ENCODE measurements at regions of chr4 and their contacts with region 1.

Region 1: GRCh38 chr4:41281038-41281634 is 24.4 kb downstream of the UCHL1 start:
- H3K4me3 Mint-ChIP-seq: no peak overlapping the region
- H3K27ac Mint-ChIP-seq: no peak overlapping the region
- H3K4me1 Mint-ChIP-seq: no peaks in the 10 kb centered on the region
- H3K27me3 Mint-ChIP-seq: peaks cover 6% of the 10 kb centered on the region

Region 2: GRCh38 chr4:40763228-40763716 is 517.9 kb before region 1 on chr4:
- intact Hi-C with region 1: no loop called
- H3K4me3 Mint-ChIP-seq: no peak overlapping the region
- H3K27ac Mint-ChIP-seq: no peak overlapping the region
- H3K4me1 Mint-ChIP-seq: peaks cover 9% of the 10 kb centered on the region
- H3K27me3 Mint-ChIP-seq: no peaks in the 10 kb centered on the region

Region 3: DNA sequence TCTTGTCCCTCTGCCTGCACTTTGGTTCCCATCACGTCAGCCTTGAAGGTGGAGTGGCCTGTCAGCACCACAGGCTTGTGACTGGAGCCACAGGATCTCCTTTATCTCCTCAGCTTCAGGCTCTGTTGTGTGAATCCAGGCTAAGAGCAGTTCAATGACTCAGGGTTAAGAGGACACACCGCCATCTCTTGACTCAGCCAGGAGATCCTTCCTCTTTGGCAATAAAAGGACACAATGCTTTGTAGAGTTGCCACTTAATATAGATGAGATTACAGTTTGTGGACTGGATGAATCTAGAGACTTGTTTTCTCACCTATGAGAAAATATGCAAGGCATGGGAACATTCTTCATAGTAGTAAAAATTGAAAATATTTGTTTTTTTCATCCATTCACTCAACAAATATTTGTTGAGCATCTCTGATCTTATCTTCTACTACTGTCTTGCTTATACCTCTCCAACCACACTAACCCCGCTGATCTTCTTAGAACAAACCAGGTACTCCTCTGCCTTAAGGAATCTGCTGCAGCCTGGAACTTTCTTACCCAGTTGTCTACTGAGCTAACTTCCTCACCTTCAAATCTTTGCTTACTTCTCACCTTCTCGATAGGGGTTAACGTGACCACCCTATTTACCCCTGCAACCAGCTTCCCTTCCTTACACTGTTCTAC is 37.9 kb after region 1 on chr4:
- intact Hi-C with region 1: no loop called
- H3K4me3 Mint-ChIP-seq: no peak overlapping the region
- H3K27ac Mint-ChIP-seq: no peak overlapping the region
- H3K4me1 Mint-ChIP-seq: peaks cover 8% of the 10 kb centered on the region
- H3K27me3 Mint-ChIP-seq: peaks cover 6% of the 10 kb centered on the region

Region 4: DNA sequence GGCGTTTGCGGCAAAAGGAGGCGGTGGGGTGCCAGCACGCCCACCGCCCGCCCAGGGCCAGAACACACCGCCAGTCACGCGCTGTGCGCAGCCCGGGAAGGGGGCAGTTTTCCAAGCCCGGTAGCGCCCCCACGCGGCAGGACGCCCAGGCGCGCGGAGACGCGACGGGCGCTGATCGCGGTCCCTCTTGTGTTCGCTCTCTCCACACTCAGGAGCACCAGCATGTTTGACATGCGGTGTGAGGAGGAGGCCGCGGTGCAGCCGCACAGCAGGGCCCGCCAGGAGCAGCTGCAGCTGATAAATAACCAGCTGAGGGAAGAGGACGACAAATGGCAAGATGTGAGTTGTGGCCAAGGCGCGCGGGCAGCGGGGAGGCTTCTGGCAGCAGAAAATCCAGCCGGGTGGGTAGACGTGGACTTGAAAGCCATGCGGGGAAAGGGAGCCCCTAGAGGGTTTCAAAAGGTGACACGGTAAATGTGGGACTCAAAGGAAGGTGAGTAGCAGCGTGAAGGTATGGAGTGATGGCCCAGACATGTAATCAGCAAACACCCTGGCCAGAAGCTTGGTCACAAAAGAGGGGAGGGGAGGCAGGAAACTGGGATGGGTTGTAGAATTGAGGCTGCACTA is 363.3 kb after region 1 on chr4:
- intact Hi-C with region 1: loop called (anchors 1 kb)
- H3K4me3 Mint-ChIP-seq: peak overlapping the region; percentile 32
- H3K27ac Mint-ChIP-seq: no peak overlapping the region
- H3K4me1 Mint-ChIP-seq: peaks cover 34% of the 10 kb centered on the region
- H3K27me3 Mint-ChIP-seq: peaks cover 36% of the 10 kb centered on the region

Region 5: DNA sequence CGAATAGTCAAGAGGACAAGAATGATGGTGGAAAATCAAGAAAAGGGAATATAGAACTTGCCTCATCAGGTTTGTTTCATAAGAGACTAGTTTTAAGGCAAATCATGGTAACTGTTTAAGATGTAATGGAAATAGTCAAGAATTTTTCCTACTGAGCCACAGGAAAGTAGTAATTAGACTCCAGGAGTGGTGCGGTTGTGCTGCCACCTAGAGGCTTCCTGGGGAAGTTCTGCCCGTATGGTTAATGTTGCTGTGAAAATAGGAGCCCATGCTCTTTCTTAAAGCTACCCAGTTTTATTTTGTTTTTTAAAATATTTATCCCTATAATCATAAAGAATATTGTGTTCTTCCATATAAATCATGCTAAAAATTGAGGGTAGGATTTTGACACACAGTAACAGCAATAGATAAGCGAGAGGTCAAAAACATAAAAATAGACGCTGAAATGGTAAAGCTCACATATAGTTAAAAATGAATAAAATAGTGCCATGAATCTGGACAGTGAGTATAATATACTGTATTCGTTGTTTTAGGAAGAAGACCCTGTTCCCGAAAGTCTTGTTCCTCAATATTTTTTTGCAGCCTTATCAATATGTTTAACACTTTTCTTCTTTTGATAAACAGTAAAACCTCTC is 380.4 kb after region 1 on chr4:
- intact Hi-C with region 1: loop called (anchors 1 kb)
- H3K4me3 Mint-ChIP-seq: no peak overlapping the region
- H3K27ac Mint-ChIP-seq: no peak overlapping the region
- H3K4me1 Mint-ChIP-seq: no peaks in the 10 kb centered on the region
- H3K27me3 Mint-ChIP-seq: peaks cover 18% of the 10 kb centered on the region

Region 6: GRCh38 chr4:41882625-41883347 is 601.6 kb after region 1 on chr4:
- intact Hi-C with region 1: loop called (anchors 1 kb)
- H3K4me3 Mint-ChIP-seq: no peak overlapping the region
- H3K27ac Mint-ChIP-seq: no peak overlapping the region
- H3K4me1 Mint-ChIP-seq: peaks cover 7% of the 10 kb centered on the region
- H3K27me3 Mint-ChIP-seq: peaks cover 87% of the 10 kb centered on the region

Measured in dendritic cell treated with granulocyte-macrophage colony-stimulating factor and Interleukin-4, amounts not matched to agents 40 ng/mL and 50 ng/mL, for 4 days (primary cell).